ENCODE measurements at regions of chr1 and their contacts with region 1.

Region 1: GRCh38 chr1:157992031-157992832 is 1.2 kb upstream of the KIRREL1 start:
- DNase-seq: peak; percentile 90
- ATAC-seq: peak; percentile 89

Region 2: DNA sequence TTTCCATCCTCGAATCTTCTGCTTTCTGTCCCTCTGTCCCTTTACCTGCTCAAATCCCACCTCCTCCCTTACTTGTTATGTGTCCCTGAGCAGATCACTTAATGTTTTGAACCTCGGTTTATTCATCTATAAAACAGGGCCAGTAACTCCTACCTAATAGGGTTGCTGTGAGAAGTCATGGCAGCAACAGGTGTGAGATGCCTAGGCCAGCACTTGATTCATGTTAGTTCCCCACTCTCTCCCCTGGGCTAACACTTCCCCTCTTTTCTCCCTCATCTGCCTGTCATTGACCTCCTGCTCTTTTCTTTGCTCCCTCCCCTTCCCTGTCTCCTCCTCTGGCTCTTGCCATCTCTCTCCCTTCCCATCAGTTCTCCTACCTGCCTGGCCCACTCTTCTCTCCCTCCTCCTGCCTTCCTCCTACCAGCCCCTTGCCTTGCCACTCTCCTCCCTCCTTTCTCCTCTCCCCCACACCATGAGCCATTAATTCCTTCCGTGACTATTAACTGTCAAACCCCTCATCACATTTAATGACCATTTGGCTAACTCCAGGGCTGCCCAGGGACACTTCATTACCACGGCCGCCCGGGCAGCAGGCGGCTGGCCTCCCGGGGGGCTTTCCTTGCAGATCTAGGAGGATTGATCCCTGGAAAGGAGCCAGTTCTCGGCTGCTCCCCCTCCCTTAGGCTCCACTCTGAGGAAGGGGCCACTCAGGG is 97.8 kb after region 1 on chr1:
- intact Hi-C with region 1: loop called (anchors 5 kb)
- DNase-seq: no peak
- ATAC-seq: no peak

Measured in sciatic nerve (tissue), 2 donors.